ENCODE measurements at regions of chr1 and their contacts with region 1.

Region 1: DNA sequence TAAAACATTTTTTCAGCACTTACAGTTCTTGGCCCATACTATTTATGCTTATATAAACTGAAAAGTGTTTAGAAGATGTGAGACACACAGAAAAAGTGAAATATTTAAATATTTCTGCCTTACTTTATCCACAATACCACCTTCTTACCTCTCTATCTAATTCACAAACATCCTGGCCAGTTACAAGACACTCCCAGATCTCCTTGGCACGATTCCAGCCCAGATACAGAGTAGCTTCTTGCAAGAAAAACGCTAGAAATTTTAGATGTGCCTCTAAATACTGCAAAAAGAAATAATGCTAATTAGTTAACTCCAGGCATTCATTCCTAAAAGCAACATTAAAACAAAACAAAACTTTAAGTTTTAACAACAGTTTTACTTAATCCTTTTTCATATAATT is 68.4 kb downstream of the USP24 start:
- DNase-seq: no peak
- H3K4me3 ChIP-seq: no peak overlapping the region
- H3K27ac ChIP-seq: no peak overlapping the region
- H3K4me1 ChIP-seq: no peaks in the 10 kb centered on the region
- H3K27me3 ChIP-seq: no peaks in the 10 kb centered on the region
- CTCF ChIP-seq: no peak
- POLR2A ChIP-seq: no peak

Region 2: DNA sequence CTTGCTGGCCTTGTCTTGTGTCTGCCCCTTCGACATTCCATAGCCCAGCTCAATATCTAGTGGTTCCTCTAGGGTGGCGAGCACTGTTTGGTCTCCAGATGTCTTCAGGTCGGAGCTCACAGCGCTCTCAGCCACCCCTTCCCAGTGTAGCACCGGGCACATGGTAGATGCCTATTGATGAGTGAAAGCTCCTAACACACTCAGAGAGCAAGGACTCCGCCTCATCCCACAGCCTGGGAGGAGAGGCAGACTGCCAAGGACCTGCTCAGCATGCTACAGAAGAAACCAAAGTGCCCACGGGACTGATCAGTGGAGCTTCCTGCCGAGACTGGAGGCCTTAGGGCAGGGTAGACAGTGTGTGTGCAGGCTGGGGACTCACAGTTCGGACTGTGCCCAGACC is 96.5 kb before region 1 on chr1:
- CTCF ChIA-PET with region 1: no interaction called
- POLR2A ChIA-PET with region 1: no interaction called
- dilution Hi-C with region 1: no loop called
- intact Hi-C with region 1: no loop called
- DNase-seq: no peak
- H3K4me3 ChIP-seq: no peak overlapping the region
- H3K27ac ChIP-seq: no peak overlapping the region
- H3K4me1 ChIP-seq: no peaks in the 10 kb centered on the region
- H3K27me3 ChIP-seq: peaks cover 1 to 2% of the 10 kb centered on the region in 2 experiments
- CTCF ChIP-seq: no peak
- POLR2A ChIP-seq: no peak

Region 3: DNA sequence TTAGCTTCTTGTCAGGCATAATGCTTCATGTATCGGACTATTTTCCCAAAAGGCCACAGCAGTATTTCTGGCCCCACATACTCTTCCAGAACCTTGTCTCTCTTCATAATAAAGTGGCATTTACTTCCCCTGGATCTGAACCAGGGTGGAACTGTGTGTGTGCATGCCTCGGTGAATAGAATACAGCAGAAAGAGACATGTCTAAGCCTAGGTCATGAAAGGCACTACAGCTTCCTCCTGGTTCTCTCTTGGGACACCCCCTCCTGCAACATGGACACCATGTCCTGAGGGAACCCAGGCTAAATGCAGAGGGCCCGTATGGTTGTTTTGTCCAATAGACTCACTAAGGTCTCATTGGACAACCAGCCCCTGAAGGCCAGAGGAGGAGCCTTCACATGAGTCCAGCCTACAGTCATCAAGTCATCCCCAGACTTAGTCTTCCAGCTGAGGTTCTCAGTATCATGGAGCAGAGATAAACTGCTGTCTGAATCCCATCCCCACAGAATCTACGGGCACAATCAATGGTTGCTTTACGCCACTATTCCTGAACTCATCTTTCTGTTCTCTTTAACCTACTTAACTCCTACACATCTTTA is 33.4 kb after region 1 on chr1:
- CTCF ChIA-PET with region 1: interaction called, 5 read pairs
- POLR2A ChIA-PET with region 1: no interaction called
- dilution Hi-C with region 1: no loop called
- intact Hi-C with region 1: loop called (anchors 5 kb)
- DNase-seq: no peak
- H3K4me3 ChIP-seq: no peak overlapping the region
- H3K27ac ChIP-seq: no peak overlapping the region
- H3K4me1 ChIP-seq: no peaks in the 10 kb centered on the region
- H3K27me3 ChIP-seq: no peaks in the 10 kb centered on the region
- CTCF ChIP-seq: no peak
- POLR2A ChIP-seq: no peak